ENCODE measurements at regions of chr19 and their contacts with region 1.

Region 1: GRCh38 chr19:12796146-12797071 is 5.1 kb downstream of the JUNB start:
- DNase-seq: no peak
- H3K4me3 ChIP-seq: peak overlapping the region in 1 of 4 donors; percentile 18
- H3K27ac ChIP-seq: peak overlapping the region; percentile 63 to 99 (median 84)
- H3K4me1 ChIP-seq: peaks cover 27 to 43% (median 38%) of the 10 kb centered on the region in 4 donors
- H3K27me3 ChIP-seq: no peaks in the 10 kb centered on the region
- CTCF ChIP-seq: peak; percentile 95 to 99 (median 95)
- EP300 ChIP-seq: no peak
- POLR2A ChIP-seq: peak; percentile 2

Region 2: GRCh38 chr19:12777217-12778016 is 19.0 kb before region 1 on chr19:
- intact Hi-C with region 1: loop called (anchors 1 kb)
- DNase-seq: no peak
- H3K4me3 ChIP-seq: peak overlapping the region; percentile 61 to 77 (median 68)
- H3K27ac ChIP-seq: peak overlapping the region; percentile 94 to 96 (median 95)
- H3K4me1 ChIP-seq: peaks cover 47 to 61% (median 53%) of the 10 kb centered on the region in 4 donors
- H3K27me3 ChIP-seq: no peaks in the 10 kb centered on the region
- CTCF ChIP-seq: peak in 2 of 3 experiments; percentile 98
- EP300 ChIP-seq: no peak
- POLR2A ChIP-seq: no peak

Measured in esophagus muscularis mucosa (tissue), 4 donors.